Posterior vena cava (tissue), 2 donors: ENCODE measurements at regions of chr15 and their contacts with region 1.

Region 1: DNA sequence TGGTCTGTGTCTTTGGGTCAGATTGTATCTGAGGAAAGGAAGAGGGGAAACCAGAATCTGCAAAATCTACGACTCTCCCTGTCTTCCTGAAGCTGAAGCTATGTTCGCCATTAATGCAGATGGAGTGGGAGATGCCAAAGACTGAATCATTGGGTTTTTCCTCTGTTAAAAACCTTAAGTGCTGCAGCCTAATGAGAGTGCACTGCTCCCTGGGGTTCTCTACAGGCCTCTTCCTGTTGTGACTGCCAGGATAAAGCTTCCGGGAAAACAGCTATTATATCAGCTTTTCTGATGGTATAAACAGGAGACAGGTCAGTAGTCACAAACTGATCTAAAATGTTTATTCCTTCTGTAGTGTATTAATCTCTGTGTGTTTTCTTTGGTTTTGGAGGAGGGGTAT is 24.0 kb downstream of the RMDN3 start:
- DNase-seq: no peak

Region 2: DNA sequence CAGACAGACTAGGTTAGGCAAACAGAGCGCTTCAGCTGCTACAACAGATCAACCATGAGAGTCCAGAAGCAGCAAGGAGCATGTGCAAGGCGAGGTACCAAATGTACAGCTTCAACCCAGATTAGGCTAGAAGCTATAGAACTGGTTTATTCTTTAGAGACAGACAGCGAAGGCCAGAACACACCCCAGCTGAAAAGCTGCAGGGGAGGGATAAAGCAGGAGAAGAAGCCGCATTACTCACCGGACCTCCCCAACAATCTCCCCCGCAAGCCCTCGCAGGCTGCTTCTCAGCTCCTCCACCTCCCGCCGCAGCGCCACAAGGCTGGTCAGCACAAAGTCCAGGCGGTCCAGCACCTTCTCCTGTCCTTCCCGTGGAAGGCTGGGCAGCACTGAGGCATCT is 20.7 kb after region 1 on chr15:
- intact Hi-C with region 1: loop called in 1 of 2 experiments (anchors 1 kb)
- DNase-seq: no peak